Colonic mucosa (tissue), 4 donors: ENCODE measurements at regions of chr21 and their contacts with region 1.

Region 1: GRCh38 chr21:33127154-33127893 is 57.4 kb downstream of the OLIG1 start:
- DNase-seq: peak; percentile 61
- H3K4me3 ChIP-seq: no peak overlapping the region
- H3K27ac ChIP-seq: no peak overlapping the region
- H3K4me1 ChIP-seq: no peaks in the 10 kb centered on the region
- H3K27me3 ChIP-seq: no peaks in the 10 kb centered on the region
- CTCF ChIP-seq: peak; percentile 56

Region 2: GRCh38 chr21:32834916-32835235 is 292.4 kb before region 1 on chr21:
- intact Hi-C with region 1: loop called (anchors 10 kb)
- DNase-seq: no peak
- H3K4me3 ChIP-seq: no peak overlapping the region
- H3K27ac ChIP-seq: no peak overlapping the region
- H3K4me1 ChIP-seq: no peaks in the 10 kb centered on the region
- H3K27me3 ChIP-seq: no peaks in the 10 kb centered on the region
- CTCF ChIP-seq: no peak